IMR-90 (cell line): ENCODE measurements at regions of chr20 and their contacts with region 1.

Region 1: GRCh38 chr20:25178563-25179438 is 16.7 kb upstream of the ENTPD6 start:
- DNase-seq: peak; percentile 91
- ATAC-seq: peak; percentile 86
- H3K4me3 ChIP-seq: no peak overlapping the region
- H3K27ac ChIP-seq: no peak overlapping the region
- H3K4me1 ChIP-seq: peaks cover 5% of the 10 kb centered on the region
- H3K27me3 ChIP-seq: peaks cover 12% of the 10 kb centered on the region
- CTCF ChIP-seq: peak; percentile 81
- POLR2A ChIP-seq: no peak
- RAD21 ChIP-seq: peak; percentile 92

Region 2: GRCh38 chr20:25000268-25000821 is 178.5 kb before region 1 on chr20:
- CTCF ChIA-PET with region 1: no interaction called
- POLR2A ChIA-PET with region 1: no interaction called
- dilution Hi-C with region 1: no loop called
- in situ Hi-C with region 1: loop called (anchors 10 kb)
- intact Hi-C with region 1: no loop called
- DNase-seq: peak; percentile 44
- ATAC-seq: peak; percentile 72
- H3K4me3 ChIP-seq: no peak overlapping the region
- H3K27ac ChIP-seq: no peak overlapping the region
- H3K4me1 ChIP-seq: peaks cover 2% of the 10 kb centered on the region; the same call in 1 of the 2 replicates
- H3K27me3 ChIP-seq: peaks cover 32% of the 10 kb centered on the region
- CTCF ChIP-seq: no peak
- POLR2A ChIP-seq: no peak
- RAD21 ChIP-seq: no peak

Region 3: DNA sequence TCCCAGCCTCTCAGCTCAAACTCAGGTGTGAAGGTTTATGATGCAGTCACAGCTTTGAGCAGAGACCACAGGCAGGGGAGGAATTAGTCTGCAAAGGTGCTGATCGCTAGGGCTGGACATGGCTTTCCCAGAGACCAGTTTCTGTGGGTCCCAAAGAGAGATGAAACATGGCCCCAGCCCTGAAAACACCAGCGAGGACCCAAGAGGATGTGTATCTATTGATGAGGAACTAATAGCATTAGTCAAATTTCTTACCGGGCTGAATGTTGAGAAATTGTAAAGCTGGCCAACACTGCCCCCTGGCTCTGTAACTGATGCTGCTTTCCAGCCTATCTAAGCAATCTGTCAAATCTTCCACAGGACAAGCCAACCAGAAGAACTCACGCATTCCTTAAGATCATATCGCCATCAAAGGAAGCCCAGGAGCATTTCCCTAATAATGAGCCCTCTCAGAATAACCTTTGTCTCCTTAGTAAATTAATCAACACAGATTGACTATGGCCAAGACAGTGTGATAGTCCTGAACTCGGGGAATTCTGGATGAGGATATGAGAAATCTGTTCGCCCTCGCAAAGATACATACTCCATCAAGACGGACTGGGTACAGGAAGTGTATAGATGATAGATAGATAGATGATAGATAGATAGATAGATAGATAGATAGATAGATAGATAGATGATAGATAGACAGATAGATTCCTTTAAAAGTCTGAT is 113.0 kb before region 1 on chr20:
- CTCF ChIA-PET with region 1: interaction called, 3 read pairs
- POLR2A ChIA-PET with region 1: no interaction called
- dilution Hi-C with region 1: no loop called
- in situ Hi-C with region 1: loop called (anchors 10 kb)
- intact Hi-C with region 1: loop called (anchors 1 kb)
- DNase-seq: peak; percentile 52
- ATAC-seq: peak; percentile 70
- H3K4me3 ChIP-seq: no peak overlapping the region
- H3K27ac ChIP-seq: no peak overlapping the region
- H3K4me1 ChIP-seq: no peaks in the 10 kb centered on the region
- H3K27me3 ChIP-seq: peaks cover 60% of the 10 kb centered on the region
- CTCF ChIP-seq: peak; percentile 72
- POLR2A ChIP-seq: no peak
- RAD21 ChIP-seq: peak; percentile 77

Region 4: DNA sequence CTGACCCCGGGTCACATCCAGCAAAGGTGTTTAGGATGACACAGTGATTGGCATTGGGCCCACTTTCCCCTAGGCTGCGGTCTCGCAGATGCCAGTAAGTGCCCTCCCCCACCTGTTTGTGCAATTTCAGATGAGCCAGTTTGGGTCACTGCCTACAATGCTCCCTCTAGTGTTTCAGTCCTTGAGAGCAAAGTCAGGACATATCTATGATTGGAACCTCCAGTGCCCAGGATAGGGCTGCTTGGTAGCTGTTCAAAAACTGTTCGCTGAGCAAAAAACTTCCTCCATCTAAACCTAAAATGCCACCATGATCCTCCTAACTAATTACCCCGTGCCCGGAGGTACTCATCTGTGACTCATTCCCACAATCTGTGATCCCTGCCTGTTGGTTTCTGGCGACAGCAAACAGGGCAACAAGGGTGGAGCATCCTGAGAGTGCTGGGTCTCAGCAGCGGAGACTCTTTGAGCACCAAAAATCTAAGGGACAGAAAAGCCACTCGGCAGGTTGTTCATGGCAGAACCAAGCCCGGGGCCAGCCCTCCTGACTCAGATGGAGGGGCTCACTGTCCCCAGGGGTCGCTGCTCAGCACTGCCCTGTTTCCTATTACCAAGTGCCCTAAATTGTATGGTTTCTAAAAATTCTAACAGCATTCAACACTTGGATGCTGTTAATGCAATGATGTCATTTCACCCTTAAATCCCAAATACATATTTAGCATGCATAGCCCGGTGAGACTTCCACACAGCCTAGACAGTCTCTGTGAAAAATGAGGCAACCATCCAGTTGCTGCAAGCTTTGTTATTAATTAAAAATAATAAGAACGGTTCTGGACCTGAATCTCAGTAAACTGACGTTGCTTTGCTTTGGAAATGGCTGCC is 101.8 kb before region 1 on chr20:
- CTCF ChIA-PET with region 1: no interaction called
- POLR2A ChIA-PET with region 1: no interaction called
- dilution Hi-C with region 1: no loop called
- in situ Hi-C with region 1: loop called (anchors 10 kb)
- intact Hi-C with region 1: no loop called
- DNase-seq: peak; percentile 1
- ATAC-seq: peak; percentile 10; the same call in 1 of the 2 replicates
- H3K4me3 ChIP-seq: no peak overlapping the region
- H3K27ac ChIP-seq: no peak overlapping the region
- H3K4me1 ChIP-seq: no peaks in the 10 kb centered on the region
- H3K27me3 ChIP-seq: peaks cover 73% of the 10 kb centered on the region
- CTCF ChIP-seq: no peak
- POLR2A ChIP-seq: no peak
- RAD21 ChIP-seq: no peak

Region 5: GRCh38 chr20:25087186-25087929 is 91.4 kb before region 1 on chr20:
- CTCF ChIA-PET with region 1: no interaction called
- POLR2A ChIA-PET with region 1: no interaction called
- dilution Hi-C with region 1: no loop called
- in situ Hi-C with region 1: no loop called
- intact Hi-C with region 1: loop called (anchors 1 kb)
- DNase-seq: no peak
- ATAC-seq: no peak
- H3K4me3 ChIP-seq: no peak overlapping the region
- H3K27ac ChIP-seq: no peak overlapping the region
- H3K4me1 ChIP-seq: no peaks in the 10 kb centered on the region; the same call in 1 of the 2 replicates
- H3K27me3 ChIP-seq: peaks cover 66% of the 10 kb centered on the region
- CTCF ChIP-seq: no peak
- POLR2A ChIP-seq: no peak
- RAD21 ChIP-seq: no peak